CD8-positive, alpha-beta T cell (primary cell): ENCODE measurements at regions of chr7 and their contacts with region 1.

Region 1: GRCh38 chr7:24979863-24980533 is at the start of gene OSBPL3:
- DNase-seq: peak; percentile 91 to 97 (median 95)
- ATAC-seq: peak; percentile 87
- H3K4me3 ChIP-seq: peak within 1 kb of the TSS; percentile 82 to 96
- H3K4me3 Mint-ChIP-seq: peak within 1 kb of the TSS; percentile 97
- H3K27ac ChIP-seq: peak within 1 kb of the TSS; percentile 59 to 85
- H3K27ac Mint-ChIP-seq: peak within 1 kb of the TSS; percentile 81
- H3K4me1 ChIP-seq: peaks cover 34% of the 10 kb centered on the region
- H3K4me1 Mint-ChIP-seq: peaks cover 54% of the 10 kb centered on the region
- H3K27me3 ChIP-seq: no peaks in the 10 kb centered on the region
- H3K27me3 Mint-ChIP-seq: no peaks in the 10 kb centered on the region
- CTCF ChIP-seq: peak; percentile 20
- total RNA-seq, gene OSBPL3: 12.0 to 13.8 TPM

Region 2: GRCh38 chr7:23597094-23598091 is 1382.6 kb before region 1 on chr7 and contains the start of gene CCDC126:
- CTCF ChIA-PET with region 1: no interaction called
- POLR2A ChIA-PET with region 1: no interaction called
- intact Hi-C with region 1: loop called in 1 of 2 experiments (anchors 5 kb)
- DNase-seq: peak; percentile 57 to 88 (median 81)
- ATAC-seq: peak; percentile 89
- H3K4me3 ChIP-seq: peak within 1 kb of the TSS; percentile 81 to 91
- H3K4me3 Mint-ChIP-seq: peak within 1 kb of the TSS; percentile 85
- H3K27ac ChIP-seq: peak within 1 kb of the TSS; percentile 55 to 63
- H3K27ac Mint-ChIP-seq: peak within 1 kb of the TSS; percentile 49
- H3K4me1 ChIP-seq: peaks cover 21% of the 10 kb centered on the region
- H3K4me1 Mint-ChIP-seq: peaks cover 34% of the 10 kb centered on the region
- H3K27me3 ChIP-seq: no peaks in the 10 kb centered on the region
- H3K27me3 Mint-ChIP-seq: no peaks in the 10 kb centered on the region
- CTCF ChIP-seq: no peak
- total RNA-seq, gene CCDC126: 10.8 to 11.9 TPM

Region 3: GRCh38 chr7:24819916-24820689 is 159.9 kb before region 1 on chr7:
- CTCF ChIA-PET with region 1: interaction called, 26 read pairs
- POLR2A ChIA-PET with region 1: interaction called, 16 read pairs
- intact Hi-C with region 1: loop called (anchors 1 kb)
- DNase-seq: peak; percentile 30 to 90 (median 74)
- ATAC-seq: peak; percentile 5
- H3K4me3 ChIP-seq: peak overlapping the region in 1 of 2 experiments; percentile 19
- H3K4me3 Mint-ChIP-seq: peak overlapping the region; percentile 74
- H3K27ac ChIP-seq: peak overlapping the region; percentile 52 to 90
- H3K27ac Mint-ChIP-seq: peak overlapping the region; percentile 93
- H3K4me1 ChIP-seq: peaks cover 28% of the 10 kb centered on the region
- H3K4me1 Mint-ChIP-seq: peaks cover 30% of the 10 kb centered on the region
- H3K27me3 ChIP-seq: no peaks in the 10 kb centered on the region
- H3K27me3 Mint-ChIP-seq: no peaks in the 10 kb centered on the region
- CTCF ChIP-seq: peak; percentile 84

Region 4: DNA sequence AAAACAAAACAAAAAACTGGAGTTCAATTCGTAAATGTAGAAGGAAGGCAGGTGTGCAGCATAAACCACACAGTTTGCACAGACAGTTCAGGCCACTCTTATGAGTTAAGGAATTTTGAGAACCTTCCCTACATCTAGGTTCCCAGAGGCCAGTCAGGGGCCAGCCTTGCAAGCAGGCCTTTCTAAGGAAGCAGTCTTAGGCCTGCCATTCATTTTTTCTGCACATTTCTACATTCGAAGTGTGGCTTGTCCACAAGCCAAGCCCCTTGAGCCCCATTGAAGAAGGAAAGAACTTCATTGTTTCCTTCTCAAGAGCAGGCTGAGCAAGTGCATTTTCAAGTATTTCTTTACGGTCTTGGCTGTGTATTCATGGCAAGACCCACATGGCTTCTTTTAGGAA is 11.4 kb after region 1 on chr7:
- CTCF ChIA-PET with region 1: interaction called, 10 read pairs
- POLR2A ChIA-PET with region 1: interaction called, 5 read pairs
- intact Hi-C with region 1: no loop called
- DNase-seq: no peak
- ATAC-seq: no peak
- H3K4me3 ChIP-seq: no peak overlapping the region
- H3K4me3 Mint-ChIP-seq: no peak overlapping the region
- H3K27ac ChIP-seq: no peak overlapping the region
- H3K27ac Mint-ChIP-seq: no peak overlapping the region
- H3K4me1 ChIP-seq: no peaks in the 10 kb centered on the region
- H3K4me1 Mint-ChIP-seq: no peaks in the 10 kb centered on the region
- H3K27me3 ChIP-seq: no peaks in the 10 kb centered on the region
- H3K27me3 Mint-ChIP-seq: no peaks in the 10 kb centered on the region
- CTCF ChIP-seq: no peak

Region 5: DNA sequence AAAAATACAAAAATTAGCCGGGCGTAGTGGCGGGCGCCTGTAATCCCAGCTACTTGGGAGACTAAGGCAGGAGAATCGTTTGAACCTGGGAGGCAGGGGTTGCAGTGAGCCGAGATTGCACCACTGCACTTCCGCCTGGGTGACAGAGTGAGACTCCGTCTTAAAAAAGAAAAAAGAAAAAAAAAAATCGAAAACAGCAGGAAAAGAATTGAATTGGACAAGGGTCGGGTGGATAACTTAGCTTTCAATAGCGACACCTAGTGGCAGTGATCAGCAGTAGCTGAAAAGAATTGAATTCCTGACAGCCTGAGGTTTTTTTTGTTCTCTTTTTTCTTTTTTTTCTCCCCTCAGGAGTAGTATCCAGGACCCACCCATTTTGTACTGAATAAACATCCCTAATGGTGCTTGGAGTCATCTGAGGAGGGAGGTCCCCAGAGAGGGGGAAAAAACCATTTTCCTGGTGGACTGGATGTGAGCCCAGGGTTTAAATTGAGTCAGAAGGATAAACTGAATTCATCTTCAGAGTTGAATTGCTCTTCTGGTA is 90.0 kb after region 1 on chr7:
- CTCF ChIA-PET with region 1: interaction called, 17 read pairs
- POLR2A ChIA-PET with region 1: interaction called, 7 read pairs
- intact Hi-C with region 1: loop called (anchors 1 to 5 kb)
- DNase-seq: peak in 8 of 9 experiments; percentile 7 to 80 (median 47)
- ATAC-seq: peak; percentile 57
- H3K4me3 ChIP-seq: no peak overlapping the region
- H3K4me3 Mint-ChIP-seq: no peak overlapping the region
- H3K27ac ChIP-seq: no peak overlapping the region
- H3K27ac Mint-ChIP-seq: no peak overlapping the region
- H3K4me1 ChIP-seq: no peaks in the 10 kb centered on the region
- H3K4me1 Mint-ChIP-seq: no peaks in the 10 kb centered on the region
- H3K27me3 ChIP-seq: no peaks in the 10 kb centered on the region
- H3K27me3 Mint-ChIP-seq: no peaks in the 10 kb centered on the region
- CTCF ChIP-seq: peak; percentile 88

Region 6: GRCh38 chr7:25125137-25125946 is 145.3 kb after region 1 on chr7 and contains the start of gene CYCS:
- CTCF ChIA-PET with region 1: no interaction called
- POLR2A ChIA-PET with region 1: interaction called, 5 read pairs
- intact Hi-C with region 1: loop called (anchors 1 to 2 kb)
- DNase-seq: peak; percentile 99 to 100 (median 99)
- ATAC-seq: peak; percentile 92
- H3K4me3 ChIP-seq: peak within 1 kb of the TSS; percentile 84 to 86
- H3K4me3 Mint-ChIP-seq: peak within 1 kb of the TSS; percentile 97
- H3K27ac ChIP-seq: peak within 1 kb of the TSS; percentile 96 to 97
- H3K27ac Mint-ChIP-seq: peak within 1 kb of the TSS; percentile 99
- H3K4me1 ChIP-seq: peaks cover 12% of the 10 kb centered on the region
- H3K4me1 Mint-ChIP-seq: peaks cover 22% of the 10 kb centered on the region
- H3K27me3 ChIP-seq: no peaks in the 10 kb centered on the region
- H3K27me3 Mint-ChIP-seq: no peaks in the 10 kb centered on the region
- CTCF ChIP-seq: no peak
- total RNA-seq, gene CYCS: 135 to 140 TPM

Region 7: GRCh38 chr7:25897261-25897782 is 917.3 kb after region 1 on chr7:
- CTCF ChIA-PET with region 1: no interaction called
- POLR2A ChIA-PET with region 1: no interaction called
- intact Hi-C with region 1: no loop called
- DNase-seq: no peak
- ATAC-seq: no peak
- H3K4me3 ChIP-seq: no peak overlapping the region
- H3K4me3 Mint-ChIP-seq: no peak overlapping the region
- H3K27ac ChIP-seq: no peak overlapping the region
- H3K27ac Mint-ChIP-seq: no peak overlapping the region
- H3K4me1 ChIP-seq: peaks cover 14% of the 10 kb centered on the region
- H3K4me1 Mint-ChIP-seq: peaks cover 21% of the 10 kb centered on the region
- H3K27me3 ChIP-seq: no peaks in the 10 kb centered on the region
- H3K27me3 Mint-ChIP-seq: no peaks in the 10 kb centered on the region
- CTCF ChIP-seq: no peak

Region 8: DNA sequence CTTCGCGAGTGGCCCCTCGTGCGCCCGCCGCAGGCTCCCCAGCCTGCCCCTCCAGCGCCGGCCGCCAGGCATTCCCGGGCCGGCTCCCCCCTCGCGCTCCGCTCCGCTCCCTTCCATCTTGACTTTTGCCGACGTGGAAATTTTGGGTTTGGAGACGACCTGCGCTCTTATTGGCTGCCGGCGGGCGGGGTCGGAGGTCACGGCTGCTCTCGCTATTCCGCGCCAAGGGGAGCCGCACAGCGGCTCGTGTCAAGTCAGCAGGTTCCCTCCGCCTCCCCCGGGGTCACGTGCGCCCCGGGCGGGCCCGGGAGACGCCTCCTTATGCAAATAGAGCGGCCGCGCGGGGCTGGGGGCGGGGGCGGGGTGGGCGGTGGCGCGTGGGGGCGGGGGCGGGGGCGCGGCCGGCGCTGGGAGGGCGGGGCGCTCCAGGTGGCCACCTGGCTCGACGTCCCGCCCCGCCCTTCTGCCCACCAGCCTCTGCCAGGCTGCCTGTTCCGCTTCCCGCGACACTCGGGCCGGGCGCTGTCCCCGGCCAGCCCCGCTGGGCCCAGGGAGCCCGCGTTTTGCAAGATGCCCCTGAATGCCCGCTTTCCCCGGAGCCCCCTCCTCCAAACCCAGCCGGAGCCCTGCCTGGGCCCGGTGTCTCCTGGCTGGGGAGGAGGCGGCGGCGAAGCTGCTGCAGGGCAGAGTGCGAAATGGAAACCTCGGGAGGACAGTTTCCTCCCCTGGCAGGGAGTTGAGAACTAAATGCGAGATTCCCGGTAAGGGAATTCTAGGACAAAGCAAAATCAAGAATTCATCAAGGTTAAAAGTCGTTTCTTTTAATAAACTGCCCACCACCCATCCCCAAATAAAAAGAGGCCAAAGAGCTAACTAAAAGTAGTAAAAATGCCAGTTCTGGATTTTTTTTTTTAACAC is 971.3 kb after region 1 on chr7:
- CTCF ChIA-PET with region 1: no interaction called
- POLR2A ChIA-PET with region 1: no interaction called
- intact Hi-C with region 1: loop called in 1 of 2 experiments (anchors 10 kb)
- DNase-seq: peak; percentile 70 to 93 (median 87)
- ATAC-seq: peak; percentile 97
- H3K4me3 ChIP-seq: peak overlapping the region; percentile 54 to 65
- H3K4me3 Mint-ChIP-seq: peak overlapping the region; percentile 90
- H3K27ac ChIP-seq: peak overlapping the region in 1 of 2 experiments; percentile 27
- H3K27ac Mint-ChIP-seq: peak overlapping the region; percentile 76
- H3K4me1 ChIP-seq: peaks cover 18% of the 10 kb centered on the region
- H3K4me1 Mint-ChIP-seq: peaks cover 22% of the 10 kb centered on the region
- H3K27me3 ChIP-seq: no peaks in the 10 kb centered on the region
- H3K27me3 Mint-ChIP-seq: peaks cover 2% of the 10 kb centered on the region
- CTCF ChIP-seq: no peak